Naive thymus-derived CD4-positive, alpha-beta T cell (primary cell): ENCODE measurements at regions of chr6 and their contacts with region 1.

Region 1: DNA sequence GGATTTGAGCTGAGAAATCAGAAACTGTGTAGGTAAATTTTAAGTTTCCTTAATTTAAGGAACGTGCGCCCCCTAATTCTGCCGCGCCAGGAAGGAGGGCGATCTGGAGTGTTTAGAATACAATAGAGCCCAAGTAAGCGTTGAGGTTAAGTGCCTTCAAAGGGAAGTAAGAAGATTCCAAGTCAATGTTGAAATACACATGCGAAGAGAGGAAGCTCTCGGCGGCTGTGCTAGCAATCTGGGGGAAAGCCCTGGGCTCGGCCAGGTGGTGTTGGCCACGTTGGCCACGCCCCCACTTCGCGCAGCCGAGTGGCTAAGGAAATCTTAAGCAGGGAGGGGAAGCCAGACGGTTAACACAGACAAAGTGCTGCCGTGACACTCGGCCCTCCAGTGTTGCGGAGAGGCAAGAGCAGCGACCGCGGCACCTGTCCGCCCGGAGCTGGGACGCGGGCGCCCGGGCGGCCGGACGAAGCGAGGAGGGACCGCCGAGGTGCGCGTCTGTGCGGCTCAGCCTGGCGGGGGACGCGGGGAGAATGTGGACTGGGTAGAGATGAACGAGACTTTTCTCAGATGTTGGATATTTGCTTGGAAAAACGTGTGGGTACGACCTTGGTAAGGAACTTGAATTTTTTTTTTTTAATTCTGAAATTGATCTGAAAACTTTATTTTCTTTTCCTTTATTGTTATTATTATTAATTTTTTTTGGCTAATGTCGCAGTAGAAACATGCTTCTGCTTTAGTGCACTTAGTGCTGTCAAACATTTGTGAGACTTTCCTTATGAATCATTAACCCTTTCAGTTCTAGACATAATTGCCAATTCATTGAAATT is at the start of gene PRDM1:
- DNase-seq: peak; percentile 33 to 79 (median 53)
- ATAC-seq: peak; percentile 92
- H3K4me3 ChIP-seq: peak within 1 kb of the TSS; percentile 63
- H3K4me3 Mint-ChIP-seq: peak within 1 kb of the TSS; percentile 84 to 96 (median 90)
- H3K27ac ChIP-seq: no peak within 1 kb of the TSS
- H3K27ac Mint-ChIP-seq: peak within 1 kb of the TSS; percentile 37 to 92 (median 78)
- H3K4me1 ChIP-seq: peaks cover 50 to 60% of the 10 kb centered on the region in 2 donors
- H3K4me1 Mint-ChIP-seq: peaks cover 50 to 89% (median 76%) of the 10 kb centered on the region in 7 donors
- H3K27me3 ChIP-seq: peaks cover 0 to 14% of the 10 kb centered on the region in 2 donors
- H3K27me3 Mint-ChIP-seq: peaks cover 10 to 47% (median 18%) of the 10 kb centered on the region in 5 donors
- total RNA-seq, gene PRDM1: 2.0 to 64.1 (median 22.6) TPM

Region 2: DNA sequence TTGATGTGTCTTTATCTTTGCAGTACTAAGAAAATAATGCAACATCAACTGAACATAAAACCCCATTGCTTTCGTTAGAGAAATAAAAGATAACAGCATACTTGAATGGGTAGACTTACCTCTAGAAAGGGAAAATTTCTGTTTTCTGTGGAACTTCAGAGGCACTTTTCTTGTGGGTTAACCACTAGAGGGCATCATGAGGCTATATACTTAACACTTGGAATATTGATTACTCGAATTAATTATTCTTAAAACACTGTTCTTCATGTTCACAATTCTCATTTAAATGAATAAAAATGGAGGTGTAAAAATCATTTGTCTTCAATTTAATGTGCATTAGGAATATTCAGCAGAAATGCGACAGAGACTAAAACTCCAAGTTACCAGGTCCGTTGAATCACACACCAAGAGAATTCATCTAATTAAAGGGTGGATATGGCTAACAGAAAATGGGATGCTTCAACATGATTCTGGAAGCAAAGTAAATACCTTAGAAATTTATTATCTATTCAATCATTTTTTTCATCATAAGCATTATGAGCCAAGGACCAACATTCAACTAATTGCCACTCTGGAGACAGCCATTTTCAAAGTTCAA is 352.5 kb before region 1 on chr6:
- CTCF ChIA-PET with region 1: no interaction called
- POLR2A ChIA-PET with region 1: no interaction called
- intact Hi-C with region 1: loop called (anchors 1 to 2 kb)
- DNase-seq: peak in 6 of 9 donors; percentile 10 to 41 (median 34)
- ATAC-seq: no peak
- H3K4me3 ChIP-seq: no peak overlapping the region
- H3K4me3 Mint-ChIP-seq: no peak overlapping the region
- H3K27ac ChIP-seq: no peak overlapping the region
- H3K27ac Mint-ChIP-seq: no peak overlapping the region
- H3K4me1 ChIP-seq: no peaks in the 10 kb centered on the region
- H3K4me1 Mint-ChIP-seq: peaks cover 0 to 36% (median 8%) of the 10 kb centered on the region in 7 donors
- H3K27me3 ChIP-seq: no peaks in the 10 kb centered on the region
- H3K27me3 Mint-ChIP-seq: peaks cover 0 to 8% (median 0%) of the 10 kb centered on the region in 5 donors

Region 3: GRCh38 chr6:105780146-105780860 is 305.9 kb before region 1 on chr6:
- CTCF ChIA-PET with region 1: no interaction called
- POLR2A ChIA-PET with region 1: no interaction called
- intact Hi-C with region 1: no loop called
- DNase-seq: no peak
- ATAC-seq: no peak
- H3K4me3 ChIP-seq: no peak overlapping the region
- H3K4me3 Mint-ChIP-seq: peak overlapping the region in 2 of 10 donors; percentile 39 to 53
- H3K27ac ChIP-seq: no peak overlapping the region
- H3K27ac Mint-ChIP-seq: peak overlapping the region in 6 of 9 donors; percentile 23 to 73 (median 56)
- H3K4me1 ChIP-seq: peaks cover 12 to 26% of the 10 kb centered on the region in 2 donors
- H3K4me1 Mint-ChIP-seq: peaks cover 23 to 72% (median 57%) of the 10 kb centered on the region in 7 donors
- H3K27me3 ChIP-seq: no peaks in the 10 kb centered on the region
- H3K27me3 Mint-ChIP-seq: no peaks in the 10 kb centered on the region

Region 4: GRCh38 chr6:106056060-106056745 is 30.0 kb before region 1 on chr6:
- CTCF ChIA-PET with region 1: no interaction called
- POLR2A ChIA-PET with region 1: no interaction called
- intact Hi-C with region 1: loop called in 1 of 2 experiments (anchors 1 kb)
- DNase-seq: peak in 7 of 9 donors; percentile 22 to 69 (median 50)
- ATAC-seq: peak; percentile 68
- H3K4me3 ChIP-seq: peak overlapping the region; percentile 26
- H3K4me3 Mint-ChIP-seq: peak overlapping the region; percentile 1 to 80 (median 58)
- H3K27ac ChIP-seq: no peak overlapping the region
- H3K27ac Mint-ChIP-seq: peak overlapping the region in 4 of 9 donors; percentile 1 to 49 (median 2)
- H3K4me1 ChIP-seq: peaks cover 19 to 22% of the 10 kb centered on the region in 2 donors
- H3K4me1 Mint-ChIP-seq: peaks cover 6 to 32% (median 29%) of the 10 kb centered on the region in 7 donors
- H3K27me3 ChIP-seq: no peaks in the 10 kb centered on the region
- H3K27me3 Mint-ChIP-seq: peaks cover 0 to 11% (median 0%) of the 10 kb centered on the region in 5 donors

Region 5: DNA sequence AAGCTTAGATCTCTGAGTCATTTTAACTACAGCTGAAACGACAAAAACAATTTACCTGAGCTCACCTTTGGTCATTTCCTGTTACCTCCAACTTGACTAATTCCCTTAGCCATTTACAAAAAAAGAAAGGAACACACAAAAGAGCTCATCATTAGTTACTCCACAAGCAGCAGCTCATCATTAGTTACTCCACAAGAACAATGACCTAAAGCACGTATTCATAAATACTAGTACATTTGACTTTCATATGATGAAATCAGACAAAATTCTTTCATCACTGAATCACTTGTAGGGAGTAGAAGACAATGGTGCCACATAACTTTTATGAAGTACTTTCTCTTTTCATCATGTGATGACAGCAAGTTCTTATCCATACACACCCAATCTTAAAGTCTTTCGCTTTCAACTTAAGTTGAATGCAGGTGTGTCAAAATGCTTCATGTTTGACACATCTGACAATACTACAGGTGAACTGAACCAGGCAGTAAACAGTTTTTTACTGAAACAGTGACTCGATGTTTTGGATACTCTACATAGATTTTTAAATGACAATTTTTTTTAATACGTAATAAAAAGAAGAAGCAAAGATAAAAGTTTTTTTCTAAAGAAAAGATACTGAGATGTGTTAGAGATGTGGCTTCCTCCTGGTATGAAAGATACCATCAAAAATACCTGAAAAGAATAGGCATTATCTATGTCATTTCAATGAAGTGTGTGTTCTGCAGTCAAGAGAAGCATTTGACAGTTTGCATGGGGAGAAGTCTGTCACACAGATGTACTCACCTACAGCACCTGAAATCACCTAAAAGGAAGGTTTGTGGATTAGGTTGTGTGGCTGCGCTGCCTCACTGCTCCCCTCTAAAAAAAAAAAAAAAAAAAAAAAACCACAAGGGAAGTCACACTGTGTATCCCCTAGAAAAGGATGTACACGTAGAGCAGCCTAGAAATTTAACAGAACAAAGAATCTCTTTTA is 109.0 kb after region 1 on chr6:
- CTCF ChIA-PET with region 1: no interaction called
- POLR2A ChIA-PET with region 1: no interaction called
- intact Hi-C with region 1: loop called in 1 of 2 experiments (anchors 1 kb)
- DNase-seq: peak in 7 of 9 donors; percentile 43 to 70 (median 57)
- ATAC-seq: peak; percentile 81
- H3K4me3 ChIP-seq: peak overlapping the region; percentile 21
- H3K4me3 Mint-ChIP-seq: peak overlapping the region; percentile 19 to 80 (median 71)
- H3K27ac ChIP-seq: peak overlapping the region; percentile 30
- H3K27ac Mint-ChIP-seq: peak overlapping the region; percentile 64 to 91 (median 84)
- H3K4me1 ChIP-seq: peaks cover 30 to 36% of the 10 kb centered on the region in 2 donors
- H3K4me1 Mint-ChIP-seq: peaks cover 24 to 54% (median 41%) of the 10 kb centered on the region in 7 donors
- H3K27me3 ChIP-seq: no peaks in the 10 kb centered on the region
- H3K27me3 Mint-ChIP-seq: no peaks in the 10 kb centered on the region